Cardiac septum (tissue), 1 donor: ENCODE measurements at regions of chr5 and their contacts with region 1.

Region 1: GRCh38 chr5:36606428-36607113 is at the start of gene SLC1A3:
- DNase-seq: no peak
- total RNA-seq, gene SLC1A3: 53.0 TPM

Region 2: GRCh38 chr5:36414869-36415282 is 191.7 kb before region 1 on chr5:
- intact Hi-C with region 1: loop called (anchors 5 kb)
- DNase-seq: no peak

Region 3: DNA sequence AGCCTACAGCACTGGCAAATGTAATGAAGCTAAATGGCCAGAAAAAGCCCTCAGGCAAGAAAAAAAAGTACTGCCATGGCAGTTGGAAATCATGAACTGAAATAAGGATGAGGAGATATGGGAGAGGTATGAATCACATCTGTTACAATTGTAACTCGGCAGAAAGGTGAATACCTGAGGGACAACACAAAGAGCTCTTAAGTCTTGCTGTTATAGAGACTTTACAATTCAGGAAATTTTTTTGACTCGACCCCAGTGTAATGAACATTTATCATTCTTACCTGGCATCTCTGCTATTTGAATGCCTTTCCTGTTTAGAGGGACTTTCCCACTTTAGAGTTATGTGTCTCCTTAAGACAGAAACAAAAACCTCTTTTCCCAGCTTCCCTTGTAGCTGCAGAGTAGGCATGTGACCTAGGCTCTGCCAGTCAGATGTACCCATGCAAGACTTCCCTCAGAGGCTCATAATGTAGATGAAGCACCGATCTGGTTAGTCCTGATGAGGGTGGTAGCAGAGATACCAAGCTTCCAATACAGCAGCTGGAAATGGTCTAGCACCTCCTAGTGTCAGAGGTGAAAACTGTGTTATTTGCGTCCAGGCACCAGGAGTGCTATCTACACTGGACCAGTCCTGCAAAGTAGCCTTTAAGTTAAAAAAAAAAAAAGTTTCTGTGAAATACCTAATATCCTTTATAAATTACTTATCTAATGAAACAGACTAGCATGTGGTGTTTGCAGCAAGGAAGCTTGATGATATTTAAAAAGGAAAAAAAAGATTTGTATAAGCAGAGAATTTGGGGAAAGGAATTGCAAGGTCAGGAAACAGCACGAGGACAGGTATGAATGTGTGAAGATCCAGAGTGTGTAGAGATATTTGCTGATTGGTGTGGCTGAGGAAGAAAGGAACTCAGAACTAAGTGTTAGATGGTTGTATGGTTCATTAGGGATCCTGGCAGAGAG is 147.1 kb before region 1 on chr5:
- intact Hi-C with region 1: no loop called
- DNase-seq: no peak

Region 4: DNA sequence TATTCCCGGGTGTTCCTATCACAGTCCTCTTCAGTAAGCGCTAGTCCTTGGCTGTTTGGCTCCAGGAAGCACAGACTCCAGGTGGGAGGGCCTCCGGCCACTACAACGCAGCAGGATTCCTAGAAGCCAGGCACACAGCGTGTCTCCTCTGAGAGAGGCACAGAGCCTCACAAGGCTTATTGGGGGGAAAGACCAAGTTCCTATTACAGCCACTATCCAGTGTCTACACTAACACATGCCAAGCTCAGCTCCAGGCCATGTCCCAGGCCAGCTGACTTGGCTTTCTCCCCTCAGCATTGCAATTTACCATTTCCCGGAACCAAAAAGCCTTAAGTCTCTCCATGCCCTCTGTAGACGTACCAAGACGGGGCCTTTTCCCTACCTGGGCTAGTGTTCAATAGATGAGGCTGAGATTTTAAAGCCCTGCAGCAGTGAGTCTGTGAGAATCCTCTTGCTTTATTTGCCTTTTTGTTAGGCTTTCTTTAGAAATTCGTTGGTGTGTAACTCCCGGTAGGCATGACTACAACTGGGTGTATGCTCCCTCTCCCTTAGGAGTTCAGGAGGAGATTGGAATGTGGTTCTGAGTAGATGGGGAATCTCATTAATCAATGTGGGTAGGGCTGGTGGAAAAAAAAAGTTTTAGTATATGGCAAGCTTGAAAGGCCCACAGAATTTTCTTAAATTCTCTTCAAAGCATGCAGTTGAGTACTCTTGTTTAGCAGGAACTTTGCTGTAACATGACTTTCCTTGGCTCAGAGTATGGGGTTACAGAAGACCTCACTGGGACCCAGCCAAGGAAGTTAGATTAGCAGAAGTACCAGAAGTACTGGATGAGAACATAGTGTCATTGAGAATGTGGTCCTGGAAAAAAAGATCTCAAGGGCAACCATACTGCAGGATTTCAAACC is 84.5 kb before region 1 on chr5:
- intact Hi-C with region 1: loop called (anchors 5 kb)
- DNase-seq: no peak

Region 5: DNA sequence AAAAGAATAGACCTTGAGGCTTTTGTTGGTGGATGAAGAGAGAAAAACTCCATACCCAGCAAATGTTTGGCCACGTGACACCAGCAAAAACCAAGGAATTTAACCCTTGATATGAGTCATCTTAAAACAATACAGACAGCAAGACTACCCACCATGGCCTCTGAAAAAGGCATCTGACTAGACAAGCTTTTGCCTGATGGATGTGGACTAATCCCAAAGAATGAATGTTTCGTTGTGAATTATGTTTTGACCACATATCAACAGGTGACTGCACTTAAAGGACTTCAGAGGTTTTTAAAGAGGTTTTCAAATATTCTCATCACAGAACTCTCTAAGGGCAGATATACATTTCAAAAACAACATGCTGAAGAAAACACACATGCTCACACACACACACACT is 33.1 kb before region 1 on chr5:
- intact Hi-C with region 1: loop called (anchors 5 kb)
- DNase-seq: no peak